ENCODE measurements at regions of chr17 and their contacts with region 1.

Region 1: DNA sequence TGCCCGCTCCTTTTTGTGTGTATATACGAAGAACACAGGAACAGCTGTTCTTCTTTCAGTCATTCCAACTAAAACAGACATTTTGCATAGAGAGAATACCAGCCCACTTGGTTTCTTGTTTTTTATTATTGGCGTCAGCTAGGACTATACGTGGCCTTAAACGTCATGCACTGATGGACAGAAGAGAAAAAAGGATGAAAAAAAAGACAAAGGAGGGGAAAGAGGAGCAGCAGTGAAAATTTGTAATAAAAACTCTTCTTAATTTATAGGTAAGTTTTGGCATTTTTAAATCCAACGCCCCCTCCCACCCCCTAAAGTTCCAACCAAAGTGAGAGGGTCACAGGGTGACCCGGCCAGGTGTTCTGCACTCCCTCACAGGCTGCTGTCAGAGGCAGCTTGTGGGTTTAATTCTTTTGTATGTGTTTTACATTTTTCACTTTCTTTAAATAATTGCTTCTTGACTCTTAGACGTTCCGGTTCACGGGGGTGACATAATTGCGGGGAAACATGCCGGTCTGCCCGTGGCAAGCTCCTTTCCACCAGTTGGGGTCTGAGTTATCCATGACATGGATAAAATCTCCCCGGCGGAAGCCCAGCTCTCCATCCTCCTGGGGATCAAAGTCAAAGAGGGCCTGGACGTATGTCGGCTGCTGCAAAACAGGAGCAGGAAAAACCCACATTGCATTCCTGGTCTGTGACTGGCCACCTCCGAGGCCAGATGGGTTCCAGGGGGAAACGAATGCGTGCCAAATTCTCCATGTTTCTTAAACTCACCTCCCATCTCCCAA is 30.9 kb upstream of the SLC25A19 start:
- DNase-seq: no peak
- H3K4me3 Mint-ChIP-seq: no peak overlapping the region
- H3K27ac Mint-ChIP-seq: peak overlapping the region; percentile 43
- H3K4me1 Mint-ChIP-seq: peaks cover 23% of the 10 kb centered on the region
- H3K27me3 Mint-ChIP-seq: no peaks in the 10 kb centered on the region

Region 2: DNA sequence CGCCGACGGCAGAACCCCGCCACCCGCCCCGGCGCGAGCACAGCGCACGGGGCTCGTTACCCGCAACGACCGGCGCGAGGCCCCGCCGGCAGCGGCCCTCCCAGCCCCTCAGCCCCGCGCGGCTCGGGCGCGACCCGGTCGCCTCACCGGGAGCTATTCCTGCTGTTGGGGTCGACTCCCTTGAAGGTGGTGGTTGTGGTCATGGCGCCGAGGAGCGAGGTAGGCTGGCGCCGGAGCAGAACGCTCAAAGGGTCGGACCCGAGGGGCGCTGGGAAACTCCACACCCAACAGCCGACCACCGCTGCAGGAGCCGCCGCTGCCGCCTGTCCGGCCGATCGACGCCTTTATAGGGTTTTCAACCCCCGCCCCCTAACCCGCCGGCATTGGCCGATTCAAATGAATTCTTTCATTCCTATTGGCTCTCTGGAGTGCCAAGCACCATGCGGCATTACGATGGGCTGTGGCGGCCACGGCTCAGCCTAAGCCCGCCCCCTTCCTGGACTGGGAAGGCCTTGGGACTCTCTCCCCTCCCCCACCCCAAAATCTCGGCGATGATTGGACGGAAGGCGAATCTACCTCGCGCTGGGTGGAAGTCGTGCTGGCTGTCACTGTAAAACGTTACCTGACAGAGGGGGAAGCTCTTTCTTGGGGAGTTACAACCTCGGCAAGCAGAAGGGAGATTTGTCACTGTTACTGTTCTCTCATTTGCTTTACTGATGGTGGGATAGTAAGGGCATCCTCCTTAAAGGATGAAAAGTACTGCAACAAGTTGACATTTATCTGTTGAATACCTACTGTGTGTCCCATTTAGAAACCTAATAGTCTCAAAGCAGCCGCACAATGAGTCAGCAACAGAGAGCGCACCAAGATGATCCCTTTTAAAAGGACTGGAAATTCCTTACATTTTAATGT is 165.6 kb before region 1 on chr17 and contains the start of gene JPT1:
- CTCF ChIA-PET with region 1: no interaction called
- intact Hi-C with region 1: no loop called
- DNase-seq: peak; percentile 100
- H3K4me3 Mint-ChIP-seq: peak within 1 kb of the TSS; percentile 94
- H3K27ac Mint-ChIP-seq: peak within 1 kb of the TSS; percentile 78
- H3K4me1 Mint-ChIP-seq: peaks cover 30% of the 10 kb centered on the region
- H3K27me3 Mint-ChIP-seq: no peaks in the 10 kb centered on the region
- total RNA-seq, gene JPT1: 242 to 258 TPM

Region 3: DNA sequence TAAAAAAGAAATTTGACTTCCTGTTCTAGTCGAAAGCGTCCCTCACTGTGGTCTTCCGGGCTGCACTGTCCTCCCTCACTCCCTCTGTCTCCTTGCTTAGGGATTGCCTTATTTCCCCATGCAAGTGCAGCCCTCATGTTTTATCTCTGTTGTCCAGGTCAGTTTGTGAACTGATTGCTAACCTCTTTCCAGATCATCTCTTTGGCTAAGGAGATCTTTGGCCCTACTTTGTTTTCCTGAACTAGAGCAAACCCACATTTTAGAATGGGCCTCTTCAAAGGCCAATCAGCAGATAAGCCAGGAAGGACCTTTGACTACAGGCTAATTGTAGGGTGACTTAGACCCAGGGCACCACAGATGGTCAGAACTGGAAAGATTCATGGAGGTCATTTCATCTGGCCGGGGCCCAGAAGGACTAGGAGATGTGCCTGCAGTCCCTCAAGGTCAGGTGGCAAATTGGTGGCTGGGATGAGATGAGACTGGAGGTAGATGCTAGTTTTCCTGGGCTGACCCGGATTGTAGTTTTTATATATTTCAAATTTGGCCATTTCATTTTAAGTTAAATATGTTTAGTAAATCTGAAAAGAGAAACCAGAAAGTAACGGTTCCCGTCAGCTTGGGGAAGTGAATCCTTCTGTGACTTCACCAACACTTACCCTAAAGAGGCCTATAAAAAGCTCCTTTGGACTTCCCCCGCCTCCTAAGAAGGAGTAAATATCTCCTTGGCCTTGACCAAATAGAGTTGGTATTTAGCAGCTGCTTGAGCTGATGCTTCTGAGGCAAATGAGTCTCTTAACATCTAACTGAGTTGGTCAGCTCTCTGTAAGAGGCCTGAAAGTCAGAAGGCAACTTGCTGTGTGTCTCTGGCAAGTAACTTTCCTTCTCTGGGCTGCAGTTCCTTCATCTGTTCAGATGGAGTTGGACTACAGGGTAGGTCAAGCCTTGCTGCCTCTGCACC is 24.6 kb before region 1 on chr17:
- CTCF ChIA-PET with region 1: interaction called, 20 read pairs
- intact Hi-C with region 1: loop called (anchors 1 kb)
- DNase-seq: peak; percentile 74
- H3K4me3 Mint-ChIP-seq: peak overlapping the region; percentile 42
- H3K27ac Mint-ChIP-seq: peak overlapping the region; percentile 89
- H3K4me1 Mint-ChIP-seq: peaks cover 41% of the 10 kb centered on the region
- H3K27me3 Mint-ChIP-seq: no peaks in the 10 kb centered on the region

Region 4: DNA sequence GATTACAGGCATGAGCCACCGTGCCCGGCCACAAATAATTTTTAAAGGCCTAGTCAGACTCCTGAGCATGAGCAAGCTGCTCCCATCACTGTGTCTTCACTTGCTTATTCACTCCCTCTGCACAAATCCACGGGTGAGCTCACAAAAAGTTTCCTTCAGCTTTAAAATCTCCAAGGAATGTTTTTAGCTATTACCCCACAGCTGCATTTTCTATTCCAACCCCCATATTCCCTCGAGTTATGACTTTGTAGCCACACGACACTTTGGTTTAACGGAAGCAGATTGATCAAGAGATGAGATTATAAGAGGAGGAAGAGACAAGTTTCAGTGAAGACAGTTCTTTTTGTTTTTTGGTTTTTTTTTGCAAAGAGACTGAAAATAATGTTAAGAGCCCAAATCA is 18.2 kb after region 1 on chr17:
- CTCF ChIA-PET with region 1: interaction called, 15 read pairs
- intact Hi-C with region 1: loop called (anchors 2 kb)
- DNase-seq: no peak
- H3K4me3 Mint-ChIP-seq: peak overlapping the region; percentile 56
- H3K27ac Mint-ChIP-seq: peak overlapping the region; percentile 90
- H3K4me1 Mint-ChIP-seq: peaks cover 78% of the 10 kb centered on the region
- H3K27me3 Mint-ChIP-seq: no peaks in the 10 kb centered on the region

Region 5: DNA sequence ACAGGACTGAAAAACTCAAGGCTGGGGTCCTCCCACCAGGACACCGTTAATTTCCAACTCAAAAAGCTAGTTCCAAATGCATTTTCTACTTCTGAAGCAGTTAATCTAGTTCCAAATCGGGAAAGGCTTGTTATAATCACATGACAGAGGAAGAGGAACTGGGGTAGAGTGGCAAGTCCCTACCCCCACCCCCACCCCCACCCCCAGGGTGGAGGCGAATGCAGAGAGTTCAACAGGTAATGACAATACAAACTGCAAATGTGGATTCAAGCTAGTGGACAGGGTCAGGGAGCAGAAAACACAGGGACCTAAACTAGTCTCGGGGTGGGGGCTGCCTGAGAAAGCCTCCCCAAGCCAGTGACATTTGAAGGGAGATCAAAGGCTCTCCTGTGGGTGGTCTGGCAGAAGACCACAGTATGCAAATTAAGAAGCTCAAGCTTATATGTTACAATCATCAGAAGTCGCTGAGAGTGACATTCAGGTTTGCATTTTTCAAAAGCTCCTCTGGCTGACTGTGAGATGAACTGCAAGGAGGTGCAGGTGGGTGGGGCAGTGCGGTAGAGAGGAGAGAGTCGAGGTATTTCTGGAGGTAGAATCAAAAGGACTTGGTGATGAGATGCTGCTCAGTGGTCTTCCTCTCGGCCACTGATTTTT is 25.5 kb after region 1 on chr17:
- CTCF ChIA-PET with region 1: interaction called, 10 read pairs
- intact Hi-C with region 1: no loop called
- DNase-seq: peak; percentile 62
- H3K4me3 Mint-ChIP-seq: peak overlapping the region; percentile 39
- H3K27ac Mint-ChIP-seq: peak overlapping the region; percentile 66
- H3K4me1 Mint-ChIP-seq: peaks cover 94% of the 10 kb centered on the region
- H3K27me3 Mint-ChIP-seq: no peaks in the 10 kb centered on the region

Region 6: GRCh38 chr17:75364078-75364477 is 44.0 kb after region 1 on chr17:
- CTCF ChIA-PET with region 1: no interaction called
- intact Hi-C with region 1: loop called (anchors 1 kb)
- DNase-seq: no peak
- H3K4me3 Mint-ChIP-seq: no peak overlapping the region
- H3K27ac Mint-ChIP-seq: peak overlapping the region; percentile 82
- H3K4me1 Mint-ChIP-seq: peaks cover 93% of the 10 kb centered on the region
- H3K27me3 Mint-ChIP-seq: no peaks in the 10 kb centered on the region

Region 7: DNA sequence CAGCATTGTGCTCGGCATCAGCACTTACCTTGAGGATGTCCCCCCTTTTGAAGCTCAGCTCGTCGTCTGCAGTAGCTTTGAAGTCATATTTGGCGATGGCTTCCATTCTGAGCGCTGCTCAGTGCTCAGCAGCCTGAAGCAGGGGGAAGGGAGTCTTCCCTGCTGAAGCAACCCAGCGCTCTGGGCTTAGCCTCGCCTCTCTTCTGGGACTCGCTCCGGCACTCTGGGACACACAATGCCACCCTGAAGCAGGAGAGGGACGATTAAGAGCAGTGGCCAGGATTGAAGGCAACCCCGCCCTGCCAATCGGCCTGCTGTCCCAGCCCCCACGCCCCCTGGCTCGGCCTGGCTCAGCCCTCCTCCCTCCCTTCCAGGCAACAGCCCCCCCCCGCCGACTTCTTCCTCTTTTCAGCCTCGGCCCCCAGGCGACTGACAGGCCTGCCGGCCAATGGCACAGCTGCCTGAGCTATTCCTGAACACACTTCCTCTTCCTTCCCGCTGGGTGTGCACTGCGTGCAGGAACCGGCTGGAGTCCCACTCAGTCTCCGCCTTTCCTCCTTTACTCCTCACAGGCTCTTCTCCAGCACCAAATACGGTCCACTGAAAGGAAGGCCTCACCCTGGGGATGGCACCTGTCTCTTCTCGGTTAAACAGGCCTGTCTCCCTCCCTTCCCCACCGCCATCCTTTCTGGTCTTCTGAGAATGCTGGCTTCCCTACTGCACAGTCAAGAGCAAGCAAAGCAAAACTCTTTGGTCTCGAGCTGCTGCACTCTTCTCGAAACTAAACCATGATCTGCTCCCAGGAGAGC is 73.6 kb after region 1 on chr17:
- CTCF ChIA-PET with region 1: interaction called, 15 read pairs
- intact Hi-C with region 1: no loop called
- DNase-seq: peak; percentile 91
- H3K4me3 Mint-ChIP-seq: peak overlapping the region; percentile 93
- H3K27ac Mint-ChIP-seq: peak overlapping the region; percentile 66
- H3K4me1 Mint-ChIP-seq: peaks cover 81% of the 10 kb centered on the region
- H3K27me3 Mint-ChIP-seq: no peaks in the 10 kb centered on the region

Region 8: GRCh38 chr17:75412455-75413317 is 92.6 kb after region 1 on chr17:
- CTCF ChIA-PET with region 1: interaction called, 19 read pairs
- intact Hi-C with region 1: no loop called
- DNase-seq: peak; percentile 87
- H3K4me3 Mint-ChIP-seq: peak overlapping the region; percentile 37
- H3K27ac Mint-ChIP-seq: no peak overlapping the region
- H3K4me1 Mint-ChIP-seq: peaks cover 18% of the 10 kb centered on the region
- H3K27me3 Mint-ChIP-seq: no peaks in the 10 kb centered on the region

Region 9: DNA sequence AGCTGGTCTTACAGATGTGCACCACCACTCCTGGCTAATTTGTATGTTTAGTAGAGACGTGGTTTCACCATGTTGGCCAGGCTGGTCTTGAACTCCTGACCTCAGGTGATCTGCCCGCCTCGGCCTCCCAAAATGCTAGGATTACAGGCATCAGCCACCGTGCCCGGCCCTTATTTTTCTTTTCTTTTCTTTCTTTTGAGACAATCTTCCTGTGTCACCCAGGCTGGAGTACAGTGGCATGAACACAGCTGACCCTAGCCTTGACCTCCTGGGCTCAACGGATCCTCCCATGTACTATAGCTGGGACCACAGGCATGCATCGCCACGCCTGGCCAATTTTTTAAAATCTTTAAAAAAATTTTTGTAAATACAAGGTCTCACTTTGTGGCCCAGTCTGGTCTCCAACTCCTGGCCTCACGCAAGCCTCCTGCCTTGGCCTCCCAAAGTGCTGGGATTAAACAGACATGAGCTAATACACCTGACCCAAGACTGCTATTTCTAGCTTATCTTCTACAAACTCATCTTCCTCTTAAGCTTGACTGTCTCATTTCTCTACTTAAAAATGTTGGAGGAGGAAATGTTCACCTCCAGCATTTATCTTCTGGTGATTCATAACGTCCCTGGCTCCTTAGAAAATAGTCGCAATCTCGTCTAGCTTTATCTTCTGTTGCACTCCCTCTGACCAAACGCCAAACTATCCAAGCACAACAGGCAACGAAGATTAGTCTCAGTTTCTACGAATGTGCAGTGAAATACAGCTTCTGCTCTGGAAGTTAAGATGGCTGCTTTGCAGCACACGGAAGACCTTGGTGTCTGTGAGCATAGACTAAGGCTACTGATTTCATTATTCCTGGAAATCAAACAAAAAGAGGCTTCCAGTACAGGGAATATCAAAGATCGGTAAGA is 128.1 kb after region 1 on chr17:
- CTCF ChIA-PET with region 1: no interaction called
- intact Hi-C with region 1: no loop called
- DNase-seq: no peak
- H3K4me3 Mint-ChIP-seq: no peak overlapping the region
- H3K27ac Mint-ChIP-seq: no peak overlapping the region
- H3K4me1 Mint-ChIP-seq: no peaks in the 10 kb centered on the region
- H3K27me3 Mint-ChIP-seq: no peaks in the 10 kb centered on the region

Measured in activated naive CD4-positive, alpha-beta T cell treated with anti-CD3 and anti-CD28 coated beads for 36 hours (primary cell).